ENCODE measurements at regions of chr10 and their contacts with region 1.

Region 1: GRCh38 chr10:119445311-119445934 is 97.1 kb downstream of the RGS10 start:
- DNase-seq: peak; percentile 50
- H3K4me3 ChIP-seq: no peak overlapping the region
- H3K27ac ChIP-seq: no peak overlapping the region
- H3K27me3 ChIP-seq: no peaks in the 10 kb centered on the region
- CTCF ChIP-seq: peak; percentile 93

Region 2: GRCh38 chr10:119080521-119081260 is 364.7 kb before region 1 on chr10 and contains the start of gene EIF3A:
- CTCF ChIA-PET with region 1: no interaction called
- POLR2A ChIA-PET with region 1: no interaction called
- DNase-seq: peak; percentile 68
- H3K4me3 ChIP-seq: peak within 1 kb of the TSS; percentile 93
- H3K27ac ChIP-seq: peak within 1 kb of the TSS; percentile 95
- H3K27me3 ChIP-seq: no peaks in the 10 kb centered on the region
- CTCF ChIP-seq: no peak
- polyA plus RNA-seq, gene EIF3A: 55.7 and 80.8 TPM in 2 replicates

Region 3: DNA sequence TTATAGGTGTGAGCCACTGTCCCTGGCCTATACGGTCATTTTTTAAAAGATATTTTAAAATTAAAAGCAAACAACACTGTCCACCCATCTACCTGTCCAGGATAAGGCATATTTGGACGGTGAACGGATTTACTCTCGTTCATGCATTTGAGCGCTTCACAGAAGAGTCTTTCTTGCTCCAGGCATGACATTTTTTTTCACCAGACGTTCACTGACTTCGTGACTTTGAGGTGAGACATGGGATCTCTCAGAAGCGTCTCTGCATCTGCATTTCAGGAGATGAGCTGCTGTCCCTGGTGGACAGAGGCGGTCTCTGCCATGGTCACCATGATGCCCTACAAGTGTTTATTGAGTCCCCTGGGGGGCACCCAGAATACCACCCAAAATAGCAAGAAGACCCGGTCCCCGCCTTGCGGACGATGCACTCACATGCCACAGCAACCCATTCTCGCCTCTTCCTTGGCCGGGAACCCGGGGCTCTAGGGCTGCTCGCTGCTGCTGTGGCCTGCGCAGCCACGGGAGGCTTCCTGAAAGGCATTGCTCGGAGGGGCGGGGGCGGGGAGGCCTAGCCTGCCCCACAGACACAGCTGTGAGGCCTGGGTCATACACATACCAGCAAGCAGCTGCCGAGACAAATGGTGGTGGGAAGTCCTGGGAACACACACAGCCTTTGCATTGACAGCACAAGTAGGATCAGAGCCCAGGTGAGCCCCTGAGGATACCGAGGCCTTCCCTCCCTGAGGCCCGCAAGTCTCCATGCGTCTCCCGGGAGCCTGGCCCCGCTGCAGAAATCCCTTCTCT is 12.7 kb after region 1 on chr10:
- CTCF ChIA-PET with region 1: interaction called, 11 read pairs
- POLR2A ChIA-PET with region 1: no interaction called
- DNase-seq: no peak
- H3K4me3 ChIP-seq: no peak overlapping the region
- H3K27ac ChIP-seq: no peak overlapping the region
- H3K27me3 ChIP-seq: peaks cover 6% of the 10 kb centered on the region
- CTCF ChIP-seq: no peak

Measured in AG04450 (cell line).